ENCODE measurements at regions of chr20 and their contacts with region 1.

Region 1: GRCh38 chr20:51562332-51563155 is 20.0 kb upstream of the NFATC2 start:
- DNase-seq: peak in 3 of 5 donors; percentile 6 to 34 (median 21)
- H3K4me3 ChIP-seq: peak overlapping the region; percentile 15 to 44
- H3K4me3 Mint-ChIP-seq: peak overlapping the region; percentile 69 to 83 (median 73)
- H3K27ac ChIP-seq: no peak overlapping the region
- H3K27ac Mint-ChIP-seq: no peak overlapping the region
- H3K4me1 ChIP-seq: peaks cover 28% of the 10 kb centered on the region
- H3K4me1 Mint-ChIP-seq: peaks cover 8 to 45% (median 14%) of the 10 kb centered on the region in 4 donors
- H3K27me3 ChIP-seq: peaks cover 45% of the 10 kb centered on the region
- H3K27me3 Mint-ChIP-seq: peaks cover 33 to 36% of the 10 kb centered on the region in 2 donors

Region 2: DNA sequence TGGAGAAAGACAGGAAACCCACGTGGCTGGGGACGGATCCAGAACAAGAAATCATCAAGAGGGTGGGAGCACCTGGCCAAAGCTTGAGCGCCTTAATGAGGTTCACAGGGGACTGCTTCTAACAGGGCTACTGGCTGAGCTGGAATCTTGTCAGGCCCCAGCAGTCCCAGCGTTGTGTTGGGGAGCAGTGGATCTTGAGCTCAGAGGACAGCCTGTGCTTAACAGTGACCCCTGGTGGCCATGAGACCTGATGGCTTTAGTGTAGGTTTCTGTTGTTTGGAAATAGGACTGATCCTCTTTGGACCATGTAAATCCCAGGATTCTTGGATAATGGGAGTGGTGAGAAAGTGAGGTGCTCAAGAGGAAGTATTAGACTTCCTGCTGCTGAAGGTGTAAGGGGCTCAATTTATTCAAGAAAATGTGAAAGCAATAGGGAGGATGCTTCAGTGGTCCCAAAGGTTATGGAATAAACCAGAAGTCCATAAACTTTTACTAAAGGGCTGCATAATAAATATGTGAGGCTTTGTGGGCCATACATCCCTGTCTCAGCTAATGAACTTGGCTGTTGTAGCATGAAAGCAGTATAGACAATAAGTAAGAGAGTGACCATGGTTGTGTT is 236.2 kb before region 1 on chr20:
- CTCF ChIA-PET with region 1: no interaction called
- POLR2A ChIA-PET with region 1: no interaction called
- intact Hi-C with region 1: no loop called
- DNase-seq: peak in 2 of 5 donors; percentile 28 to 37
- H3K4me3 ChIP-seq: no peak overlapping the region
- H3K4me3 Mint-ChIP-seq: no peak overlapping the region
- H3K27ac ChIP-seq: no peak overlapping the region
- H3K27ac Mint-ChIP-seq: no peak overlapping the region
- H3K4me1 ChIP-seq: no peaks in the 10 kb centered on the region
- H3K4me1 Mint-ChIP-seq: no peaks in the 10 kb centered on the region
- H3K27me3 ChIP-seq: no peaks in the 10 kb centered on the region
- H3K27me3 Mint-ChIP-seq: peaks cover 6 to 20% of the 10 kb centered on the region in 2 donors

Region 3: DNA sequence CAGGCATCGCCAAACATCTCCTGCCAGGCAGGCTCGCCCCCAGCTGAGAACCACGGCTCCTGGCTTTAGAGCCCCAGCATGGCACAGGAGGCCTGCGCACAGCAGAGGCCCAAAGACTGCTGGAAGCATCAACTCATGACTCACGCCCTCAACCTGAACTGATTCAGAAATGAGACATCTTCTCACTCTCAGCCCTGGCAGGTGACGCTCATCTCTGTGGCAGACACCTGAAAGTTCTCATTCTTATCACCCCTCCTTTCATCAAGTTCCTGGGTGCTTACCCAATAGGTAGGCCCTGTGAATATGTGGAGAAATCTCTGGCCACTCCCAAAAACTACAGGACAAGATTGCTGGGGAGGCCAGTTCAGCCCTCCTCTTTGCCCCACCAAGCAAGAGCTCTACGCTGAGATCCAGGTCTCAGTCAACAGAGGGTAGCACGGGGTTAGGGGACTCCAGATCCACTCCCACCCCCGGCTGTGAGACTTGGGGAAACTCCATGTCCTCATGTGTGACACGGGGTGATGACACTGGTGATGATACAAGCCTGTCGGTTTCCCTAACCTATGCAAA is 31.3 kb before region 1 on chr20:
- CTCF ChIA-PET with region 1: no interaction called
- POLR2A ChIA-PET with region 1: no interaction called
- intact Hi-C with region 1: loop called (anchors 2 kb)
- DNase-seq: peak; percentile 41 to 94 (median 49)
- H3K4me3 ChIP-seq: no peak overlapping the region
- H3K4me3 Mint-ChIP-seq: peak overlapping the region; percentile 46 to 97 (median 76)
- H3K27ac ChIP-seq: peak overlapping the region; percentile 80
- H3K27ac Mint-ChIP-seq: peak overlapping the region; percentile 97 to 99 (median 98)
- H3K4me1 ChIP-seq: peaks cover 96% of the 10 kb centered on the region
- H3K4me1 Mint-ChIP-seq: peaks cover 74 to 100% (median 86%) of the 10 kb centered on the region in 4 donors
- H3K27me3 ChIP-seq: no peaks in the 10 kb centered on the region
- H3K27me3 Mint-ChIP-seq: no peaks in the 10 kb centered on the region

Measured in CD4-positive, alpha-beta memory T cell (primary cell).